A673 (cell line): ENCODE measurements at regions of chr12 and their contacts with region 1.

Region 1: DNA sequence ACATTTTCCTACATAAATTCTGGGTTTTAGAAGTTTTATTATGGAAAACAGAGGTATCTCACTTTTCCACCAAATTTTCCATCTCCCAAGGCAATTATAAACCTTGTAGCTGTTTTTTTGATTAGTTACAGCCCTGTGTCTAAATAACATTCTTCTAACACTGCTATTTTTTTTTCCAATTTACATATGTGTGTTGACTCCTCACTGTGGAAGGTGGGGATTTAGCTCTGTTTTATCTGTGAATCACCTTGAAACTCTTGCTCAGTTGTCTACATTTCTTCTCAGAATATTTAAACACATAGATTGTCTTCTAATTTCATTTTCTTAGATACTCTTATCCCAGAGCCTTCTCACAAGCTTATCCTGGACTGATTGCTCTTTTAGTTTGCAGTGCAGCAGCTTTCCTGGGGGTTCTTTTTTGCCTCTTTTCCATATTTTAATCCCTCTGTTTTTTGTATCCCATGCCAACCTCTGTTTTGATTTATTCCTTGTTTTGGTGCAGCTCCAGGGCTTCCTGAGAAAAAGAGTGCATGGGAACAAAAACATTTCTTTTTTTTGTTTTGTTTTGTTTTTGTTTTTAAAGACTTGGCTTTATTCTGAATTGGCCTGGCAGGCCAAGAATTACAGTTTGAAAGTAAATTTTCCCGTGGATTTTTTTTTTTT is 36.7 kb downstream of the TBC1D15 start:
- DNase-seq: peak; percentile 65
- H3K4me3 ChIP-seq: no peak overlapping the region
- H3K27ac ChIP-seq: peak overlapping the region; percentile 99
- H3K4me1 ChIP-seq: peaks cover 91% of the 10 kb centered on the region
- H3K27me3 ChIP-seq: no peaks in the 10 kb centered on the region
- CTCF ChIP-seq: no peak

Region 2: GRCh38 chr12:71799106-71799505 is 77.2 kb before region 1 on chr12:
- CTCF ChIA-PET with region 1: interaction called, 5 read pairs
- POLR2A ChIA-PET with region 1: no interaction called
- intact Hi-C with region 1: loop called (anchors 5 kb)
- DNase-seq: peak; percentile 80
- H3K4me3 ChIP-seq: peak overlapping the region; percentile 12
- H3K27ac ChIP-seq: peak overlapping the region; percentile 91
- H3K4me1 ChIP-seq: peaks cover 52% of the 10 kb centered on the region
- H3K27me3 ChIP-seq: no peaks in the 10 kb centered on the region
- CTCF ChIP-seq: no peak

Region 3: GRCh38 chr12:72081777-72082176 is 205.5 kb after region 1 on chr12:
- CTCF ChIA-PET with region 1: no interaction called
- POLR2A ChIA-PET with region 1: no interaction called
- intact Hi-C with region 1: loop called (anchors 5 kb)
- DNase-seq: peak; percentile 55
- H3K4me3 ChIP-seq: no peak overlapping the region
- H3K27ac ChIP-seq: no peak overlapping the region
- H3K4me1 ChIP-seq: peaks cover 33% of the 10 kb centered on the region
- H3K27me3 ChIP-seq: no peaks in the 10 kb centered on the region
- CTCF ChIP-seq: no peak

Region 4: GRCh38 chr12:72380441-72380840 is 504.2 kb after region 1 on chr12:
- CTCF ChIA-PET with region 1: no interaction called
- POLR2A ChIA-PET with region 1: no interaction called
- intact Hi-C with region 1: loop called (anchors 5 kb)
- DNase-seq: peak; percentile 75
- H3K4me3 ChIP-seq: no peak overlapping the region
- H3K27ac ChIP-seq: peak overlapping the region; percentile 82
- H3K4me1 ChIP-seq: peaks cover 33% of the 10 kb centered on the region
- H3K27me3 ChIP-seq: no peaks in the 10 kb centered on the region
- CTCF ChIP-seq: no peak